B cell (primary cell): ENCODE measurements at regions of chr1 and their contacts with region 1.

Region 1: GRCh38 chr1:36134505-36135329 is 9.7 kb upstream of the COL8A2 start:
- DNase-seq: peak; percentile 56
- ATAC-seq: peak; percentile 49
- H3K4me3 ChIP-seq: no peak overlapping the region
- H3K4me3 Mint-ChIP-seq: no peak overlapping the region
- H3K27ac ChIP-seq: no peak overlapping the region
- H3K27ac Mint-ChIP-seq: no peak overlapping the region
- H3K4me1 ChIP-seq: no peaks in the 10 kb centered on the region
- H3K4me1 Mint-ChIP-seq: no peaks in the 10 kb centered on the region
- H3K27me3 ChIP-seq: no peaks in the 10 kb centered on the region
- H3K27me3 Mint-ChIP-seq: no peaks in the 10 kb centered on the region
- CTCF ChIP-seq: peak; percentile 57

Region 2: GRCh38 chr1:36099681-36100341 is 34.9 kb before region 1 on chr1:
- CTCF ChIA-PET with region 1: interaction called, 58 read pairs
- POLR2A ChIA-PET with region 1: no interaction called
- intact Hi-C with region 1: loop called (anchors 1 kb)
- DNase-seq: peak; percentile 81
- ATAC-seq: peak; percentile 86
- H3K4me3 ChIP-seq: peak overlapping the region in 1 of 5 experiments; percentile 9
- H3K4me3 Mint-ChIP-seq: no peak overlapping the region
- H3K27ac ChIP-seq: no peak overlapping the region
- H3K27ac Mint-ChIP-seq: no peak overlapping the region
- H3K4me1 ChIP-seq: peaks cover 0 to 7% of the 10 kb centered on the region in 2 donors
- H3K4me1 Mint-ChIP-seq: peaks cover 2% of the 10 kb centered on the region
- H3K27me3 ChIP-seq: no peaks in the 10 kb centered on the region
- H3K27me3 Mint-ChIP-seq: no peaks in the 10 kb centered on the region
- CTCF ChIP-seq: peak; percentile 93

Region 3: DNA sequence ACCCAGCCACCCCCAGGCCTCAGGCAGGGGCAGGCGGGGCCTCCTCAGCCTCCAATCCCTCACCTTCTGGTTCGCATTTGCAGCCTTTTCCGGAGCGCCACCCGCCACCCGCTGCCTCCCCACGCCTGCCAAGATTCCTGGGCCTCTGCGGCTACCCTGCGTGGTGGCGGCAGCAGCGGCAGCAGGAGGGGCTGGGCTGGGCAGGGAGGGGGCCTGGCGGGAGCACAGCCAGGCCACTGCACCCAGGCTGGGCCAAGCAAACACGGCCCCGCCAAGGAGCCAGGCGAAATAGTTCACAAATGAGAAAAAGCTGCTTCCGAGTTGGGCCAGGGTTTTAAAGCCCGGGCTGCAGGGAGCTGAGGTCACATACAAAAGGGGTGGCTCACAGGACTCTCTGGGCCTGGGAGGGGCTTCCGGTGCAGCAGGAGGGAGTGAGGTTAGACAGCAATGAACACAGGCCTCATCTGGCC is 19.5 kb before region 1 on chr1:
- CTCF ChIA-PET with region 1: interaction called, 20 read pairs
- POLR2A ChIA-PET with region 1: no interaction called
- intact Hi-C with region 1: no loop called
- DNase-seq: no peak
- ATAC-seq: no peak
- H3K4me3 ChIP-seq: no peak overlapping the region
- H3K4me3 Mint-ChIP-seq: no peak overlapping the region
- H3K27ac ChIP-seq: no peak overlapping the region
- H3K27ac Mint-ChIP-seq: no peak overlapping the region
- H3K4me1 ChIP-seq: no peaks in the 10 kb centered on the region
- H3K4me1 Mint-ChIP-seq: no peaks in the 10 kb centered on the region
- H3K27me3 ChIP-seq: peaks cover 0 to 5% (median 0%) of the 10 kb centered on the region in 4 experiments
- H3K27me3 Mint-ChIP-seq: no peaks in the 10 kb centered on the region
- CTCF ChIP-seq: no peak

Region 4: DNA sequence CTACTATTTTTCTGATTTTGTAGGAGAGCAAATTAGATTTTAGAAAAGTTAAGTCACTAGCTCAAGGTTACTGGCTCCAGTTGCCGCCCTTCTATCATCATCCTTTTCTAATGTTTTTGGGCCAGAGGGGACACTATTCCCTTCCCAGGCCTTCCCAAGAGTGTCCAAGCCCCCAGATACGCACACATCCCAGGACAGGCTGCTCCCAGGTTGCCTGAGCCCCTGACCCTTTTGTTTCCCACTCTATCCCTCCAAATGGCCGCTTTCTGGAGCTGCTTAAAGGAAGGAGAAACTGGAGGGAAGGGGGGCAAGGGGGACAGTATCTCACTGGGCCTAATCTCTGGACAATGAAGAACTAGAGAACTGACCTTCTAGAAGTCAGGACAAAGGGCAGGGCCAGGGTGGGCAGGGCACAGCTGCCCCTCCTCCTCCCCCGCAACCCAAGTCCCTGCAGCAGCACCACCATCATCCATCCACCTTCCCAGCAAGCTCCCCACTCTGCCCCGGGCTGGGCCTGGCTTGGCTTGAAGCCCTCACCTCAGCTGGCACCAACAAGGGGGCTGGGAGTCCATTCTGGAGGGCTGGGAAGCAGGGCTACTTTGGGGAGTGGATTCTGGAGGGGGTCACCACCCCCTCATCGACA is 20.2 kb after region 1 on chr1:
- CTCF ChIA-PET with region 1: no interaction called
- POLR2A ChIA-PET with region 1: no interaction called
- intact Hi-C with region 1: no loop called
- DNase-seq: no peak
- ATAC-seq: no peak
- H3K4me3 ChIP-seq: peak overlapping the region; percentile 70 to 97 (median 91)
- H3K4me3 Mint-ChIP-seq: peak overlapping the region; percentile 89
- H3K27ac ChIP-seq: peak overlapping the region; percentile 96
- H3K27ac Mint-ChIP-seq: peak overlapping the region; percentile 95
- H3K4me1 ChIP-seq: peaks cover 54 to 60% of the 10 kb centered on the region in 2 donors
- H3K4me1 Mint-ChIP-seq: peaks cover 67% of the 10 kb centered on the region
- H3K27me3 ChIP-seq: no peaks in the 10 kb centered on the region
- H3K27me3 Mint-ChIP-seq: no peaks in the 10 kb centered on the region
- CTCF ChIP-seq: no peak

Region 5: GRCh38 chr1:36175137-36176095 is 40.7 kb after region 1 on chr1:
- CTCF ChIA-PET with region 1: no interaction called
- POLR2A ChIA-PET with region 1: no interaction called
- intact Hi-C with region 1: no loop called
- DNase-seq: peak; percentile 69
- ATAC-seq: peak; percentile 39
- H3K4me3 ChIP-seq: no peak overlapping the region
- H3K4me3 Mint-ChIP-seq: no peak overlapping the region
- H3K27ac ChIP-seq: peak overlapping the region; percentile 16 to 62
- H3K27ac Mint-ChIP-seq: peak overlapping the region; percentile 61
- H3K4me1 ChIP-seq: peaks cover 11 to 13% of the 10 kb centered on the region in 2 donors
- H3K4me1 Mint-ChIP-seq: peaks cover 17% of the 10 kb centered on the region
- H3K27me3 ChIP-seq: no peaks in the 10 kb centered on the region
- H3K27me3 Mint-ChIP-seq: no peaks in the 10 kb centered on the region
- CTCF ChIP-seq: no peak